ENCODE measurements at regions of chr1 and their contacts with region 1.

Region 1: DNA sequence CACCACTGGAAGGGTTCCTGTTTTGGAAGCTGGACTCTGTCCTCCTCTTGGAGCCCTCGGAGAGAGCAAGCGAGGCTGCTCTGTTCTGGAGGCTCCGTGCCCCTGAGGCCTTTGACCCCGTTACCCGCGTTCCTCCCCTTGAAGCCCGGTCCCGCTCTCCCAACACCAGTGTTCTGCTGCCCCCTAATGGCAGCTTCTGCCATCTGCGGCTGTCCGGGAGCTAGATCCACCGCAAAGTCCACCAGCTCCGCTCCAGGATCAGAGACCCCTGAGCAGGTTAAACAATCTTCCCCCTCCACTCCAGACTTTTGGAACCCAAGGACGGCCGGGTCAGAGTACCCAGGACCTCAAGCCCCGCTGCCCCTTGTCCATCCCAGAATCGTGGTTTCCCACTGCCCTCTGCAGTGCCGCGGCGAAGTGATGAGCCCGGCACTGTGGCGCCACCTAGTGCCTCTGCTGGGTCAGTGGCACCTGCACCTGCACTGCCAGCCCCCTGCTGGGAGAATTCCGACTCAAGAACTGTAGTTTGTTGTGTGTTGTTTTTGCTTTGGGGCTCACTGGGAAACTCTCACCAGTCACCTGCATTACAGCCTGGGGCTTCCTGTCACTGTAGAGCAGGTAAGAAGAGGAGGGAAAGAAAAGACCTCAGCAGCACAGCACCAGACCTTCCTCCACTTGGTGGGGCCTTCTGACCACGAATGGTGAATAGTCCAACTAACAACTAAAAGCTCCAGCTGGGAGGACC is 63.5 kb upstream of the NFASC start:
- DNase-seq: peak; percentile 82 to 98
- ATAC-seq: peak; percentile 92 to 97
- H3K4me3 ChIP-seq: peak overlapping the region; percentile 44
- H3K27ac ChIP-seq: peak overlapping the region; percentile 65 to 83
- H3K4me1 ChIP-seq: no peaks in the 10 kb centered on the region
- CTCF ChIP-seq: peak; percentile 100
- EP300 ChIP-seq: no peak
- POLR2A ChIP-seq: no peak
- RAD21 ChIP-seq: peak; percentile 89 to 99

Region 2: GRCh38 chr1:204506961-204507387 is 300.1 kb before region 1 on chr1:
- CTCF ChIA-PET with region 1: interaction called, 33 read pairs
- POLR2A ChIA-PET with region 1: no interaction called
- DNase-seq: peak; percentile 35 to 93
- ATAC-seq: peak; percentile 79 to 87
- H3K4me3 ChIP-seq: peak overlapping the region; percentile 53
- H3K27ac ChIP-seq: peak overlapping the region; percentile 78 to 89
- H3K4me1 ChIP-seq: peaks cover 21% of the 10 kb centered on the region
- CTCF ChIP-seq: no peak
- EP300 ChIP-seq: no peak
- POLR2A ChIP-seq: no peak
- RAD21 ChIP-seq: no peak

Region 3: GRCh38 chr1:204583906-204584632 is 223.0 kb before region 1 on chr1:
- CTCF ChIA-PET with region 1: interaction called, 591 read pairs
- POLR2A ChIA-PET with region 1: no interaction called
- DNase-seq: no peak
- ATAC-seq: no peak
- H3K4me3 ChIP-seq: no peak overlapping the region
- H3K27ac ChIP-seq: no peak overlapping the region
- H3K4me1 ChIP-seq: no peaks in the 10 kb centered on the region
- CTCF ChIP-seq: no peak
- EP300 ChIP-seq: no peak
- POLR2A ChIP-seq: no peak
- RAD21 ChIP-seq: no peak

Region 4: DNA sequence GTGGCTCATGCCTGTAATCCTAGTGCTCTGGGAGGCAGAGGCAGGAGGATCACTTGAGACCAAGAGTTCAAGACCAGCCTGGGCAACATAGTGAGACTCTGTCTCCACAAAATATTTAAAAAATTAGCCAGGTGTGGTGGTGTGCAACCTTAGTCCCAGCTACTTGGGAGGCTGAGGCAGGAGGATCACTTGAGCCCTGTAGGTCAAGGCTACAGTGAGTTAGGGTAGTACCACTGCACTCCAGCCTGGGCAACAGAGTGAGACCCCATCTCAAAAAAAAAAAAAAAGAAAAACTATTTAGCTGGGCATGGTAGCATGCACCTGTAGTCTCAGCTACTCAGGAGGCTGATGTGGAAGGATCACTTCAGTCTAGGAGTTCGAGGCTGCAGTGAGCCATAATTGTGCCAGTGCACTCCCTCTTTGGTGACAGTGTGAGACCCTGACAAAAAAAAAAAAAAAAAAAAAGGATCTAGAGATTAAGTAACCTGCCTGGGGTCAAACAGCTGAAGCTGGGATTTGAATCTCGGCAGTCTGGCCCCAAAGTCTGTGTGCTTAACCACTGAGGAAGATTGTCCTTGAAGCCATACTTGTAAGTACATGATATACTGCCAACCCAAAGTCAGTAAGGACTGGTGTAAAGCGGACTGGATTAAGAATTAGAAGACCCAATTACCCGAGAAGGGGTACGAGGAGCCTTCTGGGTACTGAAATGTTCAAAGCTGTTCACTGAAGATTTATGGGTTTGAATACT is 153.3 kb before region 1 on chr1:
- CTCF ChIA-PET with region 1: interaction called, 10 read pairs
- POLR2A ChIA-PET with region 1: no interaction called
- DNase-seq: no peak
- ATAC-seq: no peak
- H3K4me3 ChIP-seq: no peak overlapping the region
- H3K27ac ChIP-seq: no peak overlapping the region
- H3K4me1 ChIP-seq: no peaks in the 10 kb centered on the region
- CTCF ChIP-seq: no peak
- EP300 ChIP-seq: no peak
- POLR2A ChIP-seq: no peak
- RAD21 ChIP-seq: no peak

Region 5: GRCh38 chr1:204726478-204726877 is 80.6 kb before region 1 on chr1:
- CTCF ChIA-PET with region 1: interaction called, 17 read pairs
- POLR2A ChIA-PET with region 1: no interaction called
- DNase-seq: peak; percentile 90 to 96
- ATAC-seq: peak; percentile 87 to 90
- H3K4me3 ChIP-seq: 0 out of 3 replicates have a peak overlapping the region, but pooled peaks have one; percentile 6
- H3K27ac ChIP-seq: peak overlapping the region; percentile 45 to 82; a peak in 5 of 6 replicates
- H3K4me1 ChIP-seq: peaks cover 48% of the 10 kb centered on the region
- CTCF ChIP-seq: no peak
- EP300 ChIP-seq: no peak
- POLR2A ChIP-seq: no peak
- RAD21 ChIP-seq: no peak

Region 6: GRCh38 chr1:204828338-204828850 is 21.3 kb after region 1 on chr1:
- CTCF ChIA-PET with region 1: interaction called, 272 read pairs
- POLR2A ChIA-PET with region 1: no interaction called
- DNase-seq: peak; percentile 60 to 84
- ATAC-seq: peak; percentile 85 to 91
- H3K4me3 ChIP-seq: peak overlapping the region; percentile 32
- H3K27ac ChIP-seq: peak overlapping the region in 1 of 2 experiments; percentile 69; a peak in 3 of 6 replicates
- H3K4me1 ChIP-seq: no peaks in the 10 kb centered on the region; the same call in 2 of the 3 replicates
- CTCF ChIP-seq: no peak
- EP300 ChIP-seq: no peak
- POLR2A ChIP-seq: no peak
- RAD21 ChIP-seq: no peak

Region 7: GRCh38 chr1:204920967-204921366 is 113.9 kb after region 1 on chr1:
- CTCF ChIA-PET with region 1: no interaction called
- POLR2A ChIA-PET with region 1: no interaction called
- DNase-seq: no peak
- ATAC-seq: peak in 1 of 2 experiments; percentile 23; a peak in 1 of 6 replicates
- H3K4me3 ChIP-seq: no peak overlapping the region
- H3K27ac ChIP-seq: no peak overlapping the region
- H3K4me1 ChIP-seq: peaks cover 12% of the 10 kb centered on the region; the same call in 2 of the 3 replicates
- CTCF ChIP-seq: no peak
- EP300 ChIP-seq: no peak
- POLR2A ChIP-seq: no peak
- RAD21 ChIP-seq: no peak

Region 8: DNA sequence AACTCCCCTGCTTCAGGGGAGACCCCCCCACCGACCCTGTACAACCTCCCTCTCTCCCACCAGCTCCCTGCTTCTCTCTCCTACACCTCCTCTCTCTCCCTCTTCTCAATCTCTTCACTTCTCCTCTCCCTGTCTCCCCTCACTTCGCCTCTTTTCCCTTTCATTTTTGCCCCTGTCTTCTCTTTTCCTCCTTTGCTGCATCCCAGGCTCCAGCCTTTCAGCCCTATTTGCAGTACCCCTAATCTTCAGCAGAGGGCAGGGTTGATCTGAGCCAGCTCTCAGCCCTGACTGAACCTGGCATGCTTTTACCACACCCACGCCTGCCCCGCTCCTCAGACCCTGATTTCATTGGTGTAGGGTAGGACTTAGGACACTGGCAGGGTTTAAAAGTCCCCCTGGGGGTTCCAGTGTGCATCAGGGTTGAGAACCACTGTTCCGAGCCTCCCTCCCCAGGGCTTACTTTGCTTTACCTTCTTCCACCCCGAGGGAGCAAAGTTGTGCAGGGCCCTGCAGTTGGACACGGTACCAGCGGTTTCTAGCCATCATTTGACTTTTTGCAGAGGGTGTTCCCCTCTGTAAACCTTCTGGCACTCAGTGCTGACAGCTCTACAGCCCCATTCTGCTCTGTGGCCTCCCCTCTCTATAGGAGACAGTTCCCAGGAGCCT is 168.6 kb after region 1 on chr1:
- CTCF ChIA-PET with region 1: interaction called, 11 read pairs
- POLR2A ChIA-PET with region 1: no interaction called
- DNase-seq: peak; percentile 41 to 91
- ATAC-seq: peak; percentile 78 to 93
- H3K4me3 ChIP-seq: no peak overlapping the region
- H3K27ac ChIP-seq: no peak overlapping the region
- H3K4me1 ChIP-seq: peaks cover 12% of the 10 kb centered on the region
- CTCF ChIP-seq: peak; percentile 60
- EP300 ChIP-seq: no peak
- POLR2A ChIP-seq: no peak
- RAD21 ChIP-seq: peak; percentile 71 to 79